B cell (primary cell): ENCODE measurements at regions of chr3 and their contacts with region 1.

Region 1: DNA sequence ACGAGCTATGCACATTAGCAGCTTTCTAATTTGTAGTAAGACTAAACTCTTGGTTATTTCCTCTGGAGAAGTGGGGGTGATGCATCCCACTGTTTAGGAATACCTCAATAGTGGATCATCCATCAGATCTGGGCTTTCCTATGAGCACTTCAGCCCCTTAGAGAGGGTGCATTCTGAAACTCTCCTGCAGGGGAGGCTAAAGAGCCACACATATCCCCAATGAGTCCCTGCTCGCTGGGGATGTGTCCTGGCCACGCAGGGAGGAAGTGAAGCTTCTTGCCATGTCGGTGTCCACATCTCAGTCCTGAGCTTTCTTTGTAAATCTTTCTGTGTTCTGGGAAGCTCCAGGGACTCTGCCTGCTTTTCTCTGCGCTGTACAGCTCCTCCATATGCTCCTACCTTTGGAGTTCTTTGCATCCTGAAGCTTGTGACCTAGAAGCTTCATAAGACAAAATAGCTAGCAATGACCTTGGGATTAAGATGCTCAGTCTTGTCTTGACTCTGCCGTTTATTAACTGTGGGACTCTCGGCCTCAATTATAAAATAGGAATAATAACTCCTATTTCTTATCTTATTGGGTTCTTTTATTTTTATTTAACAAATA is 28.3 kb upstream of the MASP1 start:
- DNase-seq: peak; percentile 61
- ATAC-seq: peak; percentile 64
- H3K4me3 ChIP-seq: no peak overlapping the region
- H3K4me3 Mint-ChIP-seq: no peak overlapping the region
- H3K27ac ChIP-seq: no peak overlapping the region
- H3K27ac Mint-ChIP-seq: no peak overlapping the region
- H3K4me1 ChIP-seq: peaks cover 6% of the 10 kb centered on the region in 2 donors
- H3K4me1 Mint-ChIP-seq: peaks cover 8% of the 10 kb centered on the region
- H3K27me3 ChIP-seq: peaks cover 0 to 40% (median 21%) of the 10 kb centered on the region in 4 experiments
- H3K27me3 Mint-ChIP-seq: peaks cover 58% of the 10 kb centered on the region
- CTCF ChIP-seq: peak; percentile 73

Region 2: GRCh38 chr3:187295316-187296034 is 24.3 kb before region 1 on chr3:
- CTCF ChIA-PET with region 1: interaction called, 11 read pairs
- POLR2A ChIA-PET with region 1: no interaction called
- intact Hi-C with region 1: no loop called
- DNase-seq: no peak
- ATAC-seq: no peak
- H3K4me3 ChIP-seq: no peak overlapping the region
- H3K4me3 Mint-ChIP-seq: no peak overlapping the region
- H3K27ac ChIP-seq: no peak overlapping the region
- H3K27ac Mint-ChIP-seq: no peak overlapping the region
- H3K4me1 ChIP-seq: no peaks in the 10 kb centered on the region
- H3K4me1 Mint-ChIP-seq: no peaks in the 10 kb centered on the region
- H3K27me3 ChIP-seq: peaks cover 0 to 3% (median 0%) of the 10 kb centered on the region in 4 experiments
- H3K27me3 Mint-ChIP-seq: peaks cover 33% of the 10 kb centered on the region
- CTCF ChIP-seq: no peak

Region 3: DNA sequence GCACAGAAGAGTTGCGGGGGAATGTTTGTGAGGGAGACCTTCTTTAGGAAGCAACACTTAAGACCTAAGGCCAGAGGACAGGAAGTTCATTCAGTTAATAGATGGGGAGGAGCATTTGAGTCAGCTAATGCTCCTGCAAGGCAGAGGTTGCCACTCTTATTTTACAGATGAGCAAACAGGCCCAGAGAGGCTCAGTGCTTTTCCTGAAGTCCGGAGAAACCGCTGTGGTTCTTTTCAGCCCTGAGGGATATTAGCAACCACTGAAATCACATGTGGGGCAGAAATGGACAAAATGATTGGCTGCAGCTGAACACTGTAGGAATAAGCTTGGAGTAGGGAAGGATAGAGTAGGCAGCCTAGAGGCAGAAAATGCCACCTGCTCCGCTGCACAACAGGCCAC is 15.1 kb after region 1 on chr3:
- CTCF ChIA-PET with region 1: interaction called, 14 read pairs
- POLR2A ChIA-PET with region 1: no interaction called
- intact Hi-C with region 1: no loop called
- DNase-seq: no peak
- ATAC-seq: no peak
- H3K4me3 ChIP-seq: no peak overlapping the region
- H3K4me3 Mint-ChIP-seq: no peak overlapping the region
- H3K27ac ChIP-seq: no peak overlapping the region
- H3K27ac Mint-ChIP-seq: no peak overlapping the region
- H3K4me1 ChIP-seq: no peaks in the 10 kb centered on the region
- H3K4me1 Mint-ChIP-seq: no peaks in the 10 kb centered on the region
- H3K27me3 ChIP-seq: peaks cover 0 to 5% (median 0%) of the 10 kb centered on the region in 4 experiments
- H3K27me3 Mint-ChIP-seq: peaks cover 33% of the 10 kb centered on the region
- CTCF ChIP-seq: no peak

Region 4: GRCh38 chr3:187616307-187616972 is 296.6 kb after region 1 on chr3:
- CTCF ChIA-PET with region 1: interaction called, 8 read pairs
- POLR2A ChIA-PET with region 1: no interaction called
- intact Hi-C with region 1: loop called (anchors 1 kb)
- DNase-seq: peak; percentile 56
- ATAC-seq: no peak
- H3K4me3 ChIP-seq: no peak overlapping the region
- H3K4me3 Mint-ChIP-seq: no peak overlapping the region
- H3K27ac ChIP-seq: no peak overlapping the region
- H3K27ac Mint-ChIP-seq: no peak overlapping the region
- H3K4me1 ChIP-seq: no peaks in the 10 kb centered on the region
- H3K4me1 Mint-ChIP-seq: no peaks in the 10 kb centered on the region
- H3K27me3 ChIP-seq: peaks cover 0 to 7% (median 2%) of the 10 kb centered on the region in 4 experiments
- H3K27me3 Mint-ChIP-seq: peaks cover 24% of the 10 kb centered on the region
- CTCF ChIP-seq: peak; percentile 87

Region 5: GRCh38 chr3:187679638-187680396 is 360.0 kb after region 1 on chr3:
- CTCF ChIA-PET with region 1: interaction called, 479 read pairs
- POLR2A ChIA-PET with region 1: no interaction called
- intact Hi-C with region 1: no loop called
- DNase-seq: peak; percentile 72
- ATAC-seq: peak; percentile 66
- H3K4me3 ChIP-seq: no peak overlapping the region
- H3K4me3 Mint-ChIP-seq: no peak overlapping the region
- H3K27ac ChIP-seq: no peak overlapping the region
- H3K27ac Mint-ChIP-seq: no peak overlapping the region
- H3K4me1 ChIP-seq: no peaks in the 10 kb centered on the region
- H3K4me1 Mint-ChIP-seq: peaks cover 1% of the 10 kb centered on the region
- H3K27me3 ChIP-seq: peaks cover 0 to 19% (median 10%) of the 10 kb centered on the region in 4 experiments
- H3K27me3 Mint-ChIP-seq: peaks cover 51% of the 10 kb centered on the region
- CTCF ChIP-seq: peak; percentile 93

Region 6: GRCh38 chr3:188954590-188955208 is 1634.9 kb after region 1 on chr3:
- CTCF ChIA-PET with region 1: interaction called, 21 read pairs
- POLR2A ChIA-PET with region 1: no interaction called
- intact Hi-C with region 1: loop called (anchors 5 kb)
- DNase-seq: peak; percentile 82
- ATAC-seq: peak; percentile 83
- H3K4me3 ChIP-seq: no peak overlapping the region
- H3K4me3 Mint-ChIP-seq: no peak overlapping the region
- H3K27ac ChIP-seq: no peak overlapping the region
- H3K27ac Mint-ChIP-seq: no peak overlapping the region
- H3K4me1 ChIP-seq: no peaks in the 10 kb centered on the region
- H3K4me1 Mint-ChIP-seq: peaks cover 3% of the 10 kb centered on the region
- H3K27me3 ChIP-seq: no peaks in the 10 kb centered on the region
- H3K27me3 Mint-ChIP-seq: no peaks in the 10 kb centered on the region
- CTCF ChIP-seq: peak; percentile 88